Cardiac septum (tissue), 1 donor: ENCODE measurements at regions of chr7 and their contacts with region 1.

Region 1: DNA sequence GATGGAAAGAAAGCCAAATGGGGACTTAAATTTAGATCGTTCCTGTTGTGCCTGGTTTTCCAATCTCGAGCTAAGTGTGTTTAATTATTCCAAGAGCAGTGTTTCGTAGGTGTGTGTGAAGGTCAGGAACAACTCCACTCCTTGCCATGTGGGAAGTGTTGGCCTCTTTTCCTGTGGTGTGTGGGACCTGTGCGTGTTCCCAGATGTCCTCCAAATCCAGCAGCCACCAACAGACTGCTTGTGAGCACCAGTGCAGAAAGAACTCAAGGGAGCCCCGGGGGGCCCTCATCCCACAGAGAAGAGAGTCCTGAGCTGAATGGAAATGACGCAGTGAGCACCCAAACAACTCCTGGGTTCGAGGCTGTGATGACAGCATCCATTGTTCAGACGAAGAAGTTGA is 227.7 kb downstream of the TMEM178B start:
- DNase-seq: no peak

Region 2: GRCh38 chr7:141184532-141185190 is 116.9 kb before region 1 on chr7:
- intact Hi-C with region 1: no loop called
- DNase-seq: no peak

Region 3: DNA sequence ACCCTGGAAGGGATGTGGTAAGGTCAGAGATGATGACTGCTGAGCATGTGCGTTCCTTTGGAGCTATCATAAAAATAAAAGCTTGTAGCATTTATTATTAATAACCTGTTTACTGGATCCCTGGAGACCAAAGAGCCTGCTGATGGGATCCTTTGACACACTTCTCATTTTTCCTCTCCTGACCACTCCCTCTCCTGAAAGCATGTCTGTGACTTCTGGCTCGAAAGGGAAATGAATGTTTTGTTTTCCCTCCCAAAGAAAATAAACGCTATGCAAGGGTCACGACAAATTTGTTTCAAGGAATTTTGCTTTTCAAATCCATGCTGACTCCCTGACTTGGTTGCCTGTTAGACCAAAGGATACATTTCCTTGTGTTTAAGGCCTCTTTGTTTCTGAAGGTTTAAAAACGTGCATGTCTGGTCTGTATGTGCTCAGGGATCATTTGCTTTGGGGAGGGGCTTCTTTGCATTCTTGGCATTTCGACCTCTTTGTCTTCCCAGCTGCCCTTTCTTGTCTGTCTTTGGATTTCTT is 64.6 kb after region 1 on chr7:
- intact Hi-C with region 1: loop called (anchors 5 kb)
- DNase-seq: no peak

Region 4: GRCh38 chr7:141381794-141382453 is 80.4 kb after region 1 on chr7:
- intact Hi-C with region 1: no loop called
- DNase-seq: no peak